ENCODE measurements at regions of chr2 and their contacts with region 1.

Region 1: DNA sequence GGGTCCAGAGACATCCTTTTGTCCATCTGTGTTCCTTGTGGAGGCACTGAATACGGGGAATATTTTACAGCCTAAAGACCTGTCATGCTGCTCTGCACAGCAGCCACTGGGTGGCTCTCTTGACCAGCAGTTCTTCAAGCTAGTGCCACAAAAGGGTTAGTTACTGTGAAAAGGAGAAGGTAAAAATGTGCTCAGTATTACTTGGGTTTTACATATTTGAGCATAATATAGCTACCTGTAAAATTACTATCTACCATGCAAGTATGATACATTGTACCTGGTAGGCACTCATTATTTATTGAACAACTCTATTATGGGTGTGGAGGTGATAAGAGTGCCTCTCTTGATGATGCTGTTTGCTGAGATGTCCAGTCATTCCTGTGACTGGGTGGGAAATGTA is 23.6 kb downstream of the FZD5 start:
- DNase-seq: peak; percentile 73 to 78
- H3K4me3 ChIP-seq: no peak overlapping the region
- H3K4me3 Mint-ChIP-seq: no peak overlapping the region
- H3K27ac Mint-ChIP-seq: peak overlapping the region; percentile 12
- H3K4me1 ChIP-seq: peaks cover 52% of the 10 kb centered on the region
- H3K4me1 Mint-ChIP-seq: peaks cover 23% of the 10 kb centered on the region
- H3K27me3 ChIP-seq: no peaks in the 10 kb centered on the region
- H3K27me3 Mint-ChIP-seq: no peaks in the 10 kb centered on the region
- CTCF ChIP-seq: peak; percentile 94 to 95

Region 2: GRCh38 chr2:207807516-207807915 is 61.4 kb after region 1 on chr2:
- CTCF ChIA-PET with region 1: no interaction called
- POLR2A ChIA-PET with region 1: no interaction called
- intact Hi-C with region 1: no loop called
- DNase-seq: no peak
- H3K4me3 ChIP-seq: no peak overlapping the region
- H3K4me3 Mint-ChIP-seq: no peak overlapping the region
- H3K27ac Mint-ChIP-seq: no peak overlapping the region
- H3K4me1 ChIP-seq: peaks cover 44% of the 10 kb centered on the region
- H3K4me1 Mint-ChIP-seq: peaks cover 30% of the 10 kb centered on the region
- H3K27me3 ChIP-seq: no peaks in the 10 kb centered on the region
- H3K27me3 Mint-ChIP-seq: no peaks in the 10 kb centered on the region
- CTCF ChIP-seq: no peak

Region 3: DNA sequence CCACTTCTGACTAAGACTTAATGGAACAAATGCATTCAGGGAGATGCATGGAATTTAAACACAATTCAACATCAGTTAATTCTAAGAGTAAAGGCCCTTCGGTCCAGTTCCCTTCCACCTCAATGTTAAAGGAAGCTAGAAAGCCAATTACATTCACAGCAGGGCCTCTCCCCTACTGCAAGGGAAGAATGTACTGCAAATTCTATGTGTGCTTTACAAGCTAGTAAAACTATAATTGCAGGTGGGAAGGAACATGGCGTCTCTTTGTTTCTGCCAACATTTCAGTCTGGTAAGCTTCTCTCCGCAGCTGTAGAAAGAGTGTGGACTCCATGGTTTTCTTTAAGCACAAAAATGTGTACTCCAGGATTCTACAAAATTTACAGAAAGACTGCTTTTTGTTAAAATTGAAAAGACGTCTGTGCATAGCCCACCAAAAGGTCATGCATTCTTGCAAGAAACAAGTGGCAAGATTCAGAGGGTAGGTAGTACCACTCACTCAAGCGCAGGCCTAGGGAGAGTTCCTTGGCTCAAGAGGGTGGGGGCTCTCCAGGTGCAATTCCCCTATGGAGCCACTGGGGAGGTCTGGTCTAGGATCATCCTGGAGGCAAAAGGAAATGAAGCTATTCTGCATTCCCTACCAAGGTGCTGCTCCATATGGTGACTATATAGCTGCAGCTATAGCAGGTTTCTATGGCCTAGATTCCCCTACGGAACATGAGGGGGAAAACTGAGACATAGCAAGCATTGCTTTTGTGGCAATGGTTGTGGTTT is 150.6 kb after region 1 on chr2:
- CTCF ChIA-PET with region 1: interaction called, 4 read pairs
- POLR2A ChIA-PET with region 1: no interaction called
- intact Hi-C with region 1: loop called (anchors 2 kb)
- DNase-seq: peak; percentile 42 to 52
- H3K4me3 ChIP-seq: no peak overlapping the region
- H3K4me3 Mint-ChIP-seq: no peak overlapping the region
- H3K27ac Mint-ChIP-seq: no peak overlapping the region
- H3K4me1 ChIP-seq: peaks cover 35% of the 10 kb centered on the region
- H3K4me1 Mint-ChIP-seq: peaks cover 20% of the 10 kb centered on the region
- H3K27me3 ChIP-seq: no peaks in the 10 kb centered on the region
- H3K27me3 Mint-ChIP-seq: no peaks in the 10 kb centered on the region
- CTCF ChIP-seq: peak; percentile 39 to 44

Region 4: DNA sequence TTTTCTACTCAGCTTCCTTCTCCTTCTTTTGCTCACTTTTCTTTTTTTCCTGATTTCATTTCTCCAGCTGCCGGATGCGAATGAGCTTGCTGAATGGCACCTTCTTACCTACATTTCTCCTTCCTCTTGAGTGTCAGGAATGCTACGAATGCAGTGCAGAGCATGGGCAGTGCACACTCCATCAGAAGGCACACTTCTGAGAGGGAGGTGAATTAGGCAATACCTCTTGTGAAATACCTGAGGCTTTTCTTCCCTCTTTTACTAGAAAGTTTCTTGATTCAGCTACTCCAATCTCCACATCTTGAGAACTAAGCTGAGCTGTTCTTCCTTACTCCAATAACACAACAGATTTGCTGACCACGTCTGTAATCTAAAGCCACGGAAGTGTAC is 228.1 kb after region 1 on chr2:
- CTCF ChIA-PET with region 1: interaction called, 6 read pairs
- POLR2A ChIA-PET with region 1: no interaction called
- intact Hi-C with region 1: loop called (anchors 1 kb)
- DNase-seq: peak; percentile 58 to 60
- H3K4me3 ChIP-seq: no peak overlapping the region
- H3K4me3 Mint-ChIP-seq: peak overlapping the region; percentile 8
- H3K27ac Mint-ChIP-seq: peak overlapping the region; percentile 29
- H3K4me1 ChIP-seq: peaks cover 38% of the 10 kb centered on the region
- H3K4me1 Mint-ChIP-seq: peaks cover 31% of the 10 kb centered on the region
- H3K27me3 ChIP-seq: no peaks in the 10 kb centered on the region
- H3K27me3 Mint-ChIP-seq: no peaks in the 10 kb centered on the region
- CTCF ChIP-seq: no peak

Region 5: DNA sequence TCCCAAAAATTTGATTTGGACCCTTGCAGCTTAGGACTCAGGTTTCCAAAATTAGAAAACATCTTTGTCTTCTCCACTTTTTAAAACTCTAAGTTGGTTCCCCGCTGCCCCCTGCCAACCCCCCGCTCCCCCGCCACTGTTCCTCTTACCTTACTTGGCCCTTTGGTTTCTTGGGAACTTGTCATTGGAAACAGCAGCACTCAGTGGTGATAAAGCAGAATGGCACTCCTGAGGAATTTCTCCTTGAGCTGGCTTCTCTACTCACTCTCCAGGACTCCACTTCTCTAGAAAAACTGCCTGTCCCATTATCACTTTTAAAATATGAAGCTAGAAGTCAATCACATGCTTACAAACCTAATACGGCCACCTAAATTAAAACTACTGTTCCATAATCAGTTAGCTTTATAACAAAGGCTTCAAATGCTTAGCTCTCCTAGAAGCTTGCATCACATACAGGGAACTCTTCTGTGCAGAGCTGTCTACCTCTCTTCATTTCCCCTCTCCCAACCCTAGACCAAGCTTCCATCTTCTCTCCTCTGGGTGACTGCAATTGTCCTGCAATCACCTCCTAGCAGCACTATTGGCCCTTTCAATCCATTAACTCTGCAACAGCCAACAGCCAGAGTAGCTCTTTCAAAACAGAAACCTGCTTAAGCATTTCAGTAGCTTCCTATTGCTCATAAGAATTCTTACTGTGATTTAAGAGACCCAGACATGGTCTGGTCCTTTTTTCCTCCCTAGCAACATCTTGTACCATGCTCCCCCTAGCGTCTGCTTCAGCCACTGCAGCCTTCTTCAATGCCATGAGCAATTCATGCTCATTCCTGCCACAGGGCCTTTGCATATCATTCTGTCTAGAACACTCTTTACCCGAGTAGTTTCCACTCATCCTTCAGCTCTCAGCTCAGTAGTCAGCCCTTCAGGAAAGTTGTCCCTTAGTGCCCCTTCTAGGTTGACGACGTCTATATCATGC is 294.4 kb after region 1 on chr2:
- CTCF ChIA-PET with region 1: interaction called, 77 read pairs
- POLR2A ChIA-PET with region 1: interaction called, 3 read pairs
- intact Hi-C with region 1: loop called (anchors 1 kb)
- DNase-seq: peak; percentile 80 to 83
- H3K4me3 ChIP-seq: no peak overlapping the region
- H3K4me3 Mint-ChIP-seq: no peak overlapping the region
- H3K27ac Mint-ChIP-seq: peak overlapping the region; percentile 24
- H3K4me1 ChIP-seq: peaks cover 20% of the 10 kb centered on the region
- H3K4me1 Mint-ChIP-seq: peaks cover 26% of the 10 kb centered on the region
- H3K27me3 ChIP-seq: no peaks in the 10 kb centered on the region
- H3K27me3 Mint-ChIP-seq: no peaks in the 10 kb centered on the region
- CTCF ChIP-seq: peak; percentile 73 to 81

Region 6: DNA sequence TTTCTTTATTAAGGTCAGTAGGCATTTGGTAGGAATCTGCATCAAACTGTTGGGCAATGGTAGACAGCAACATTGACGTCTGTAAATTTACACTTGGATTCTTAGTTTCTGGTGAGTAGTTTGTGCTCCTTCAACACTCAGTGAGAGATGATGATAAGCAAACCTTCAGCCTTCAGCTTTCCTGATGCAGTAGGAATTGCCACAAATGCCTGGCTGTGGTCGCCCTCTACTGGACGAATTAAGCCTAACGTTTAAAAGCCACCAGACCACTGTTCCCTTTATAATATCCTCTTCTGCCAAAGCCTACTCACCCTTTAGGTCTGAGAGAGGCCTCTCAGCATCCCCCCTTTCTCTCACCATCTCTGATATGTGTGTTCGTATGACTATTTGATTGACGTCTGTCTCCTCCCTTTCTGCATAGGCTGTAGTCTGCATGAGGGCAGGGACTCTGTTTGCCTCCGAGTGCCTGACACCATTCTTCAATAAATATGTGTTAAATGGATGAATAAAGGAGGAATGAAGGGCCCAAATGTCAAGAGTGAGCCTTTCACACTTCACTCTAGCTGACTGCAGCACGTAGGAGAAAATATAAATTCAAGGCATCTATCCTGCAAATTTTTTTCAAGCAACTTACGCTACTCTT is 326.2 kb after region 1 on chr2:
- CTCF ChIA-PET with region 1: interaction called, 19 read pairs
- POLR2A ChIA-PET with region 1: no interaction called
- intact Hi-C with region 1: loop called (anchors 1 kb)
- DNase-seq: peak; percentile 73 to 83
- H3K4me3 ChIP-seq: no peak overlapping the region
- H3K4me3 Mint-ChIP-seq: no peak overlapping the region
- H3K27ac Mint-ChIP-seq: no peak overlapping the region
- H3K4me1 ChIP-seq: no peaks in the 10 kb centered on the region
- H3K4me1 Mint-ChIP-seq: peaks cover 3% of the 10 kb centered on the region
- H3K27me3 ChIP-seq: no peaks in the 10 kb centered on the region
- H3K27me3 Mint-ChIP-seq: no peaks in the 10 kb centered on the region
- CTCF ChIP-seq: peak; percentile 84